Left colon (tissue), 2 donors: ENCODE measurements at regions of chr20 and their contacts with region 1.

Region 1: GRCh38 chr20:36555248-36555647 is 13.9 kb downstream of the MYL9 start:
- DNase-seq: no peak
- ATAC-seq: no peak

Region 2: GRCh38 chr20:36421641-36422040 is 133.6 kb before region 1 on chr20:
- intact Hi-C with region 1: no loop called
- DNase-seq: no peak
- ATAC-seq: no peak

Region 3: DNA sequence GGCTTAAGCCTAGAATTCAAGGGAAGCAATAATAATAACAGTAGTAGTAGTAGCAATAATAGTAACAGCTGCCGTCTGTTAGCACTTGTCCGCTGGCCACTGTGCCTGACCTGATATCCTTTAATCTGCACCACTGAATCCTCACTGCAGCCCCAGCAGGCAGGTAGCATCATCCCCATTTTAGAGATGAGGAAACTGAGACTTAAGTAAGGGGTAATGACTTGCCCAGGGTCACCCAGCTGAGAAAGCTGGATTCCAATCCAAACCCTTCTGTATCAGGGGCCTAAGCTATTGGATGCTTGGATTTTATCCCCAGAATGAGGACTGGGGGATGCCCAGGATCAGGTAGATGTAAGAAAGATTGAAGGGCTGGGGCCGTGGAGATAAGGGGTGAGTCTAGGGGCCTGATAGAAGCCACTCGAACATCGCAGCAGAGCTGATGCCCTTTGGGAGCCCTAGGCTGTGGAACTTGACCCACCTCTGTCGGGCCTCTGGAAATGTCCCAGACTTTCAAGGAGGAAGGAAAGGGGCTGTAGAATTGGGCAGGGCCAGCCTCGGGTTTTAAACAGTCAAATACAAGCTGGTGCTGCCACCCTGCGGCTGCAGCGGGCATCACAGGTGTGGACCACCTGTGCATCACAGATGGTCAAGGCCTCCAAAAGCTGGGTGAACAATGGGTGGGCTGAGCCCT is 116.1 kb before region 1 on chr20:
- intact Hi-C with region 1: no loop called
- DNase-seq: peak; percentile 41 to 68
- ATAC-seq: peak; percentile 67

Region 4: GRCh38 chr20:36493013-36493800 is 62.0 kb before region 1 on chr20:
- intact Hi-C with region 1: no loop called
- DNase-seq: peak in 1 of 2 donors; percentile 40
- ATAC-seq: peak; percentile 88

Region 5: DNA sequence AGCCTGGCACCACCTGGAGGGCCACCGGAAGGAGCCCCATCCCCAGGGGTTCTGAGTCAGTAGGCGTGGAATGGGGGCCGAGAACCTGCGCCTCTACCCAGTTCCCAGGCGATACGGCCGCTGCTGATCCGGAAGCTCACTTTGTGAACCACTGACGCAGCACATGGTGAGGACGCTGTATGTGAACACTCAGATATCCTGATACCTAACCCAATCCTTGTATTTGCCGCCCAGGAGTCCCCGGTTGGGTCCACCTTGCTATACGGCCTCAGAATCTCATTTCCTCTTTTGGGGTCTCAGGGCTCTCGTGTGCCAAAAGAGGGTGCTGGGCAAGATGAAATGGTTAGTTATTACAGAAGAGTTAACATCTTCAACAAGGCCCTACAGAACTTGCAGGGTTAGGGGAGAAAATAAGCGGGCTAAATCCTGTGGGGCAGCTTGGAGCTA is 49.7 kb after region 1 on chr20:
- intact Hi-C with region 1: loop called in 1 of 2 experiments (anchors 5 kb)
- DNase-seq: peak; percentile 55 to 62
- ATAC-seq: no peak

Region 6: DNA sequence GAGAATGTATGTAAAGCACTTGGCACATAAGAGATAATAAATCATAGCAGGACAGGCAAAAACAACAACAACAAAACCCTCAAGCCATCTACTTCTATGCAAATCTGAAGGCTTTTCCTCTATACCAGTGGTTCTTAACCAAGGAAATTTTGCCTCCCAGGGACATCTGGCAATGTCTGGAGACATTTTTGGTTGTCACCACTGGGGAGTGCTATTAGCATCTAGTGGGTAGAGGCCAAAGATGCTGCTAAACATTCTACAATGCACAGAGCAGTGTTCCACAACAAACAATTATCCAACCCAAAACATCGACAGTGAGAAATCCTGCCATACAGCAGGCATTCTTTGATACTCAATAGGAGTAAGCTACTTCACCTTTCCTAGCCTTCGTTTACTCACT is 162.4 kb after region 1 on chr20:
- intact Hi-C with region 1: no loop called
- DNase-seq: no peak
- ATAC-seq: peak; percentile 31